Activated CD4-positive, alpha-beta T cell treated with anti-CD3 and anti-CD28 coated beads for 36 hours (primary cell): ENCODE measurements at regions of chr19 and their contacts with region 1.

Region 1: DNA sequence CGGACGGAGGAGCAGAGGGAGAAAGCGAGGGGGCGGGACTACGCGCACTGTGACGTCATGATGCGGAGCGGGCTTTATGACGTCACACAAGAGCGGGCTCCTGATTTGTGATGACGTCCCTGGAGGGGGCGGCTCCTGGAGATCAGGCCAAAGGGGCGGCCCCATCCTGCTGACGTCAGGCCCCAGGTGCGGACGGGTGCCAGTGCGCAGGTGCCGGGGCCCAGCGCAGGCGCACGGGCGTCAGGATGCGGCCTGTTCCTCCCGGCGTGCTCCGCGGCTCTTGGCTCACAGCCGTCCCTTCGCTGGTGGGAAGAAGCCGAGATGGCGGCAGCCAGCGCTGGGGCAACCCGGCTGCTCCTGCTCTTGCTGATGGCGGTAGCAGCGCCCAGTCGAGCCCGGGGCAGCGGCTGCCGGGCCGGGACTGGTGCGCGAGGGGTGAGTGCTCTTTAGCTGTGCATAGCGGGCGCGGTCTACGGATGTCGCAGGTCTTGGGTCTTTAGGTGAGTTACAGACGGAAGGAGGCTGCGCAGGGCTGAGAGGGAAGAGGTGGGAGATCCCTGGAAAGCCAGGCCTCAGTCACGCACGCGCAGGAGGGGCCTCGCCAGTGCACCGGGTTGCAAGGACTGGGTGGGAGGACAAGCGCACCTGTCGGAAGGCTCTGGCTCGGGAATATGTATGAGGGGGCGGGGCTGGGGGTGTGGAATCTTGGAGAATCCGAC is at the starts of genes EMC10 and GARIN5A:
- DNase-seq: peak; percentile 98
- ATAC-seq: peak; percentile 98
- H3K4me3 Mint-ChIP-seq: peak within 1 kb of the TSS; percentile 90
- H3K27ac Mint-ChIP-seq: peak within 1 kb of the TSS; percentile 84
- H3K4me1 Mint-ChIP-seq: peaks cover 18% of the 10 kb centered on the region
- H3K27me3 Mint-ChIP-seq: no peaks in the 10 kb centered on the region
- total RNA-seq, gene EMC10: 33.4 to 34.7 TPM
- total RNA-seq, gene GARIN5A: 0.48 to 0.58 TPM

Region 2: DNA sequence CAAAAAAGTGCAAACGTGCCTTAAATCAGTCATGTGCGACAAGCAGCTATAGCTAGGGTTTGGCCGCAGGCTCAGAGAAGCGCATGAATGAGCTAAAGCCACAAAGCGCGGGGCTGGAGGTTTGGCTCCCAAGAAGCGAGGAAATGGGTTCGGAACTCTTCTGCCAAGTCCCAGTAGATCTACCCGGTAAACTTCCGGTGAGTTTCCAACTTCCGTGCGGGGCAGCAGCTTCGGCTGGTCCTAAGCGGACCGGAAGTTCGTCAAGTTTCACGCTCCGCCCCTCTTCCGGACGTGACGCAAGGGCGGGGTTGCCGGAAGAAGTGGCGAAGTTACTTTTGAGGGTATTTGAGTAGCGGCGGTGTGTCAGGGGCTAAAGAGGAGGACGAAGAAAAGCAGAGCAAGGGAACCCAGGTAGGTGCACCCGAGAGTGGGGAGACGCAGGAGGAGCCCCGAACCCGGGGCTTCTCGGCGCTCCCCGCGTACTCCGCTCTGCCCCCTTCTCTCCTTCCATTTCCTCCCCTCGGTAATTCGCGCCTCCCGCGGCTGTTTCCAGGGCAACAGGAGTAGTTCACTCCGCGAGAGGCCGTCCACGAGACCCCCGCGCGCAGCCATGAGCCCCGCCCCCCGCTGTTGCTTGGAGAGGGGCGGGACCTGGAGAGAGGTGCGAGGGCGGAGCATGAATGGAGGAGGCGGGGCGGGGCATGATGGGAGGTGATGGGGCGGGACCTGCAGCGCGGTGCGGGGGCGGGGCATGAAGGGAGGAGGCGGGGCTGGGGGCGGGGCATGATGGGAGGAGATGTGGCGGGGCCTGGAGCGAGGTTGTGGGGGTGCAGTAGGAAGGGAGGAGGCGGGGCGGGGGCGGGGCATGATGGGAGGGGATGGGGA is 100.0 kb before region 1 on chr19 and contains the start of gene NR1H2:
- CTCF ChIA-PET with region 1: no interaction called
- POLR2A ChIA-PET with region 1: no interaction called
- intact Hi-C with region 1: loop called in 1 of 2 experiments (anchors 1 kb)
- DNase-seq: peak; percentile 97
- ATAC-seq: peak; percentile 89
- H3K4me3 Mint-ChIP-seq: peak within 1 kb of the TSS; percentile 89
- H3K27ac Mint-ChIP-seq: peak within 1 kb of the TSS; percentile 97
- H3K4me1 Mint-ChIP-seq: peaks cover 21% of the 10 kb centered on the region
- H3K27me3 Mint-ChIP-seq: no peaks in the 10 kb centered on the region
- total RNA-seq, gene NR1H2: 50.3 to 53.6 TPM

Region 3: GRCh38 chr19:50383852-50384684 is 92.3 kb before region 1 on chr19 and contains the start of gene POLD1:
- CTCF ChIA-PET with region 1: interaction called, 4 read pairs
- POLR2A ChIA-PET with region 1: no interaction called
- intact Hi-C with region 1: loop called in 1 of 2 experiments (anchors 1 kb)
- DNase-seq: peak; percentile 100
- ATAC-seq: peak; percentile 92
- H3K4me3 Mint-ChIP-seq: peak within 1 kb of the TSS; percentile 99
- H3K27ac Mint-ChIP-seq: peak within 1 kb of the TSS; percentile 93
- H3K4me1 Mint-ChIP-seq: peaks cover 27% of the 10 kb centered on the region
- H3K27me3 Mint-ChIP-seq: no peaks in the 10 kb centered on the region
- total RNA-seq, gene POLD1: 220 to 227 TPM

Region 4: GRCh38 chr19:50431343-50432220 is 44.8 kb before region 1 on chr19:
- CTCF ChIA-PET with region 1: no interaction called
- POLR2A ChIA-PET with region 1: no interaction called
- intact Hi-C with region 1: loop called in 1 of 2 experiments (anchors 1 kb)
- DNase-seq: peak; percentile 92
- ATAC-seq: peak; percentile 95
- H3K4me3 Mint-ChIP-seq: peak overlapping the region; percentile 72
- H3K27ac Mint-ChIP-seq: peak overlapping the region; percentile 93
- H3K4me1 Mint-ChIP-seq: peaks cover 15% of the 10 kb centered on the region
- H3K27me3 Mint-ChIP-seq: peaks cover 6% of the 10 kb centered on the region

Region 5: GRCh38 chr19:50486823-50487511 is 10.6 kb after region 1 on chr19:
- CTCF ChIA-PET with region 1: no interaction called
- POLR2A ChIA-PET with region 1: no interaction called
- intact Hi-C with region 1: no loop called
- DNase-seq: peak; percentile 87
- ATAC-seq: peak; percentile 52
- H3K4me3 Mint-ChIP-seq: no peak overlapping the region
- H3K27ac Mint-ChIP-seq: no peak overlapping the region
- H3K4me1 Mint-ChIP-seq: peaks cover 25% of the 10 kb centered on the region
- H3K27me3 Mint-ChIP-seq: no peaks in the 10 kb centered on the region

Region 6: GRCh38 chr19:50518091-50519005 is 42.0 kb after region 1 on chr19:
- CTCF ChIA-PET with region 1: no interaction called
- POLR2A ChIA-PET with region 1: no interaction called
- intact Hi-C with region 1: no loop called
- DNase-seq: peak; percentile 25
- ATAC-seq: no peak
- H3K4me3 Mint-ChIP-seq: no peak overlapping the region
- H3K27ac Mint-ChIP-seq: no peak overlapping the region
- H3K4me1 Mint-ChIP-seq: peaks cover 2% of the 10 kb centered on the region
- H3K27me3 Mint-ChIP-seq: peaks cover 9% of the 10 kb centered on the region